Naive thymus-derived CD4-positive, alpha-beta T cell (primary cell): ENCODE measurements at regions of chr3 and their contacts with region 1.

Region 1: DNA sequence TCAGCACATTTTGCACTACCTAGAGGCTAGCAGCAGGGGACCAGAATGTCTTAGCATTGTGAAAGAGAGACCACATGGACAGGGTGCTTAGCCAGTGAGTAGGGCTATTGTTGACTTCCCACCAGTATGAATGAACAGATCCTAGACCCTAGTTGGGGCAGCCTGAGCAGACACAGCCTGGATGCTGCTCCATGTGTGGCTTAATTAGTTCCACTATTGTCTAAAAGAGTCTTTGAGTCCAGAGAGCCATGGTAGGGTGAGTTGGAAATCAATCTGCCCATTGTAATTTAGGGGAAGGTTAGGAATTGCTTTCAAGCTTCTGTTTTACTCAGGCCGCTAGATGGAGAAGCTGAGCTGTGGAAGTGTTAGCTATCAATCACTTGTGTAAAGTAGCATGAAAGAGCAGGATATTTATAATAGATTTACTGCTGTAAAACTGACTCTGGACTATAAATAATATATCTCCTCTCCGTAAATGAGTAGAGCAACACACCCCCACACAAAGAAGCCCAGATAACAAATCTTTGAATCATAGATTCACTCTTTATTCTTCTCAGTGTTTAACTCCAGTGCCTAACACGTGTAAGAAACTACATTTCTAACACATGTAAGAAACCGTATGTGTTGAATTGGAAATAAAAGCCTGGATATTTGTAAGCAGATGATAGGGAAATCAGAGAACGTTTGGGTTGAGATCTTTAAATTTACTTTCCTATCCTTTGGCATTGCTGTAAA is 4.1 kb upstream of the GCSAM start:
- DNase-seq: peak in 5 of 9 donors; percentile 42 to 55 (median 53)
- ATAC-seq: no peak
- H3K4me3 ChIP-seq: no peak overlapping the region
- H3K4me3 Mint-ChIP-seq: peak overlapping the region in 2 of 10 donors; percentile 3 to 21
- H3K27ac ChIP-seq: no peak overlapping the region
- H3K27ac Mint-ChIP-seq: peak overlapping the region in 8 of 9 donors; percentile 0 to 99 (median 96)
- H3K4me1 ChIP-seq: peaks cover 19 to 45% of the 10 kb centered on the region in 2 donors
- H3K4me1 Mint-ChIP-seq: peaks cover 31 to 76% (median 60%) of the 10 kb centered on the region in 7 donors
- H3K27me3 ChIP-seq: no peaks in the 10 kb centered on the region
- H3K27me3 Mint-ChIP-seq: no peaks in the 10 kb centered on the region

Region 2: GRCh38 chr3:111737706-111738086 is 399.4 kb before region 1 on chr3:
- CTCF ChIA-PET with region 1: no interaction called
- POLR2A ChIA-PET with region 1: no interaction called
- intact Hi-C with region 1: no loop called
- DNase-seq: no peak
- ATAC-seq: no peak
- H3K4me3 ChIP-seq: no peak overlapping the region
- H3K4me3 Mint-ChIP-seq: no peak overlapping the region
- H3K27ac ChIP-seq: no peak overlapping the region
- H3K27ac Mint-ChIP-seq: no peak overlapping the region
- H3K4me1 ChIP-seq: no peaks in the 10 kb centered on the region
- H3K4me1 Mint-ChIP-seq: peaks cover 0 to 23% (median 0%) of the 10 kb centered on the region in 7 donors
- H3K27me3 ChIP-seq: no peaks in the 10 kb centered on the region
- H3K27me3 Mint-ChIP-seq: no peaks in the 10 kb centered on the region

Region 3: GRCh38 chr3:112043603-112044201 is 93.4 kb before region 1 on chr3:
- CTCF ChIA-PET with region 1: no interaction called
- POLR2A ChIA-PET with region 1: no interaction called
- intact Hi-C with region 1: no loop called
- DNase-seq: peak in 8 of 9 donors; percentile 29 to 70 (median 58)
- ATAC-seq: peak; percentile 95
- H3K4me3 ChIP-seq: no peak overlapping the region
- H3K4me3 Mint-ChIP-seq: no peak overlapping the region
- H3K27ac ChIP-seq: no peak overlapping the region
- H3K27ac Mint-ChIP-seq: no peak overlapping the region
- H3K4me1 ChIP-seq: no peaks in the 10 kb centered on the region
- H3K4me1 Mint-ChIP-seq: no peaks in the 10 kb centered on the region
- H3K27me3 ChIP-seq: no peaks in the 10 kb centered on the region
- H3K27me3 Mint-ChIP-seq: peaks cover 0 to 3% (median 0%) of the 10 kb centered on the region in 5 donors

Region 4: DNA sequence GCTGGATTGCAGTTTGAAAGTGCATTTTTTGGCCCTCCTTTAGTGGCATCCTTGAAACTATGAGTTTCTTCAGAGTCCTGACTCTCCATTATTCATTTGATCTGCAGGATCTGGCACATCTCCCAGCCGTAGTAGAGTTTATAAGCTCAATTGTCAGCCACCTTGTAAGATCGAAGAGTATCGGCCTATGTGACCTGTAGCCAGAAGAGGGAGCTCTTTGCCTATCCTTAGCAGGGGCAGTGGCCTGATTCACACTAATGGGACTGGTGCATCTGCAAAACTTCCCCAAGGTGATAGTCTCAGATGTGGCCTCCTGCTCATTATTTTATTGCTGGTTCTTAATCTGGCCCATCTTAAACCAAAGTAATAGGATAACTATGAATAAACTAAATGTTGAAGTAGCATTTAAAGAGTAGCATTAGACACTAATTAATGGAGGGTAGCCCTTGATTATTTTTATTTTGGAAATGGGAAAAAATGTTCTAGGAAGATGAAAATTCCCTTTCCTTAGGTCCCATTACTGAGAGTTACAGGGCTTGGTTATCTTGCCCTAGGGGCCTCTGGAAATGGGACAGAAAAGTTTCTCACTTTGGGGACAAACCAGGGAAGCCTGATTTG is 25.2 kb before region 1 on chr3:
- CTCF ChIA-PET with region 1: interaction called, 21 read pairs
- POLR2A ChIA-PET with region 1: interaction called, 4 read pairs
- intact Hi-C with region 1: loop called (anchors 1 kb)
- DNase-seq: peak in 7 of 9 donors; percentile 52 to 75 (median 70)
- ATAC-seq: peak; percentile 96
- H3K4me3 ChIP-seq: no peak overlapping the region
- H3K4me3 Mint-ChIP-seq: peak overlapping the region in 1 of 10 donors; percentile 14
- H3K27ac ChIP-seq: no peak overlapping the region
- H3K27ac Mint-ChIP-seq: peak overlapping the region in 4 of 9 donors; percentile 28 to 48 (median 40)
- H3K4me1 ChIP-seq: no peaks in the 10 kb centered on the region
- H3K4me1 Mint-ChIP-seq: peaks cover 2 to 18% (median 9%) of the 10 kb centered on the region in 7 donors
- H3K27me3 ChIP-seq: no peaks in the 10 kb centered on the region
- H3K27me3 Mint-ChIP-seq: no peaks in the 10 kb centered on the region

Region 5: DNA sequence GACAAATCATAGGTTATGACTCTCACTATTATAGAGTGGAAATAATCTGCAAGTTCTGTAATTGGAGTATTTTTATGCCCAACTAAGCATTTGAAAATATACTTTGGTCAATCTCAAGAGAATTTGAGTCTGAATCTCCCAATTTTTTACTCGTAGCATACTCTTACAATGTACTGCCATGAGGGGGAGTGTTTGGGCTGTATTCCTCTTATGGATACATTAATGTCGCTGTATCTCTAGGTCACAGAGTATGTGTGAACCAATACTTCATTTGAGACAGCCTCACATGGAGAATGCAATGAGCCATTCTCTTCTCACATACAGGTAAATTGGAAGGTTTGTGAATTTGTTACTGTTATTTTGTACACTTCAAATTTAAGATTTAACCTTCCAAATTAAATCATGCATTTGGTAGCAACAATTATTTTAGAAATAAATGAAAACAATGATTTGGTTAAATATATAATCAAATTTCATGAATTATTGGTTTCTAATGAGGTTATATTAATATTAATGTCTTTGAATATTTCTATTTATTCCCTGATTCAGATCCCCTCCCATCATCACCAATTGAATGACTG is 190.3 kb after region 1 on chr3:
- CTCF ChIA-PET with region 1: interaction called, 3 read pairs
- POLR2A ChIA-PET with region 1: no interaction called
- intact Hi-C with region 1: loop called (anchors 1 kb)
- DNase-seq: peak in 7 of 9 donors; percentile 41 to 76 (median 66)
- ATAC-seq: peak; percentile 100
- H3K4me3 ChIP-seq: no peak overlapping the region
- H3K4me3 Mint-ChIP-seq: no peak overlapping the region
- H3K27ac ChIP-seq: no peak overlapping the region
- H3K27ac Mint-ChIP-seq: no peak overlapping the region
- H3K4me1 ChIP-seq: no peaks in the 10 kb centered on the region
- H3K4me1 Mint-ChIP-seq: peaks cover 0 to 8% (median 6%) of the 10 kb centered on the region in 7 donors
- H3K27me3 ChIP-seq: no peaks in the 10 kb centered on the region
- H3K27me3 Mint-ChIP-seq: peaks cover 0 to 20% (median 5%) of the 10 kb centered on the region in 5 donors

Region 6: DNA sequence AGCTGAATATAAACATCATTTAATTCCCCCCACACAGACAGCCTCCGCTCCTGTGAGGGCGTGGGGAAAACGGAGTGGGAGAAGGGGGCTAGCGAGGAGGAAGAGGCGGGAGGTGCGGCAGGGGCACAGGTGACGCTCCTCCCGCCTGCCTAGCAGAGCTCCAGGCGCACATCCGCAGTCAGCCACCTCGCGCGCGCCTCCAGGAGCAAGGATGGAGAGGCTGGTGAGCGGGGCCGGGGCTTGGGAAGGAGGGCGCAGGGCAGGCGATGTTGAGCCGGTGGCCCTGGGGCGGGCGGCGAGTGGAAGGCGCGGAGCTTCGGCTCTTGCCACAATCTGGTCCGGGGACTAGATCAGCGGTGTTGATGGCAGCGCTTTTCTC is 195.9 kb after region 1 on chr3 and contains the start of gene CD200:
- CTCF ChIA-PET with region 1: interaction called, 3 read pairs
- POLR2A ChIA-PET with region 1: interaction called, 3 read pairs
- intact Hi-C with region 1: loop called in 1 of 2 experiments (anchors 2 kb)
- DNase-seq: peak; percentile 25 to 69 (median 42)
- ATAC-seq: peak; percentile 79
- H3K4me3 ChIP-seq: peak within 1 kb of the TSS; percentile 78
- H3K4me3 Mint-ChIP-seq: peak within 1 kb of the TSS; percentile 82 to 95 (median 92)
- H3K27ac ChIP-seq: peak within 1 kb of the TSS; percentile 62
- H3K27ac Mint-ChIP-seq: peak within 1 kb of the TSS; percentile 71 to 90 (median 78)
- H3K4me1 ChIP-seq: peaks cover 0 to 6% of the 10 kb centered on the region in 2 donors
- H3K4me1 Mint-ChIP-seq: peaks cover 14 to 56% (median 47%) of the 10 kb centered on the region in 7 donors
- H3K27me3 ChIP-seq: no peaks in the 10 kb centered on the region
- H3K27me3 Mint-ChIP-seq: no peaks in the 10 kb centered on the region
- total RNA-seq, gene CD200: 2.5 to 9.1 (median 2.9) TPM

Region 7: DNA sequence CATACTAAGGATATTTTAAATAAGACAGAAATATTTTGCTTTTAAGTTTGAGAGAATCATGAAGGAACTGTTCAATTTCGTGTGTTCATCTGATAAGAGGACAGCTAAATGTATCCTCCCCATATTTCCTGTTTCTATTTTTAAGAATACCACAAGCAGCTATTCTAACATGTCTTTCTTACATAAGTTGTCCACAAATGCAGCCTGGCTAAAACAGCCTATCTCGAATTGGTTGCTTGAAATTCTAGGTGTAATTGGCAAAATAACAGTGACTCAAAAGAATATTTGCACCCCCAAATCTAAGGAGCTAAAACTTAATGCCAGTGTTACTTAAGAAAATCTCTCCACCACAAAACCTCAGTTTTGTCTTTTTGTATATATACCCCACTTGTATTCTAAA is 327.1 kb after region 1 on chr3:
- CTCF ChIA-PET with region 1: no interaction called
- POLR2A ChIA-PET with region 1: no interaction called
- intact Hi-C with region 1: loop called in 1 of 2 experiments (anchors 5 kb)
- DNase-seq: peak in 7 of 9 donors; percentile 28 to 56 (median 47)
- ATAC-seq: peak; percentile 83
- H3K4me3 ChIP-seq: peak overlapping the region; percentile 7
- H3K4me3 Mint-ChIP-seq: peak overlapping the region; percentile 39 to 84 (median 74)
- H3K27ac ChIP-seq: peak overlapping the region; percentile 43
- H3K27ac Mint-ChIP-seq: peak overlapping the region; percentile 55 to 96 (median 86)
- H3K4me1 ChIP-seq: peaks cover 54 to 63% of the 10 kb centered on the region in 2 donors
- H3K4me1 Mint-ChIP-seq: peaks cover 40 to 95% (median 88%) of the 10 kb centered on the region in 7 donors
- H3K27me3 ChIP-seq: no peaks in the 10 kb centered on the region
- H3K27me3 Mint-ChIP-seq: no peaks in the 10 kb centered on the region

Region 8: DNA sequence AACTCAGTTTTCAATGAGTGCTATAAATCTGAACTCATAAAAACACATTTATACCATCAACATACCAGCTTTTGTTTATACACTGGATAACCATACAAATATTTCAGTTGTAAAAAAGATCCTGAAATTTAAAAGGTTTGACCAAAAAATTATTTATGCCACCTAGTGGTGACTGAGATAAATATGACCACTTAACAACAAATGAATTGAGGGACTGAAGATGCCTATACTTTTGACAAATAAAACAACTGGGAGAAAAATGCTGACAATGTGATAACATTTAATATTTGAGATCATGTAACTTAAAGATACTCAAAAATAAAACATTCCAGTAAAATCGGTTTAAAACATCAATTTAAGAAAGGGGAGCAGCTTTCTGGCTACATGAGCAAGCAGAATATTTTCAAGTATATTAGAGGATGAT is 394.2 kb after region 1 on chr3:
- CTCF ChIA-PET with region 1: interaction called, 8 read pairs
- POLR2A ChIA-PET with region 1: no interaction called
- intact Hi-C with region 1: loop called (anchors 1 to 5 kb)
- DNase-seq: peak in 5 of 9 donors; percentile 25 to 40 (median 25)
- ATAC-seq: peak; percentile 45
- H3K4me3 ChIP-seq: no peak overlapping the region
- H3K4me3 Mint-ChIP-seq: no peak overlapping the region
- H3K27ac ChIP-seq: no peak overlapping the region
- H3K27ac Mint-ChIP-seq: peak overlapping the region in 6 of 9 donors; percentile 7 to 72 (median 14)
- H3K4me1 ChIP-seq: no peaks in the 10 kb centered on the region
- H3K4me1 Mint-ChIP-seq: peaks cover 0 to 5% (median 3%) of the 10 kb centered on the region in 7 donors
- H3K27me3 ChIP-seq: no peaks in the 10 kb centered on the region
- H3K27me3 Mint-ChIP-seq: no peaks in the 10 kb centered on the region

Region 9: GRCh38 chr3:113002679-113003078 is 865.6 kb after region 1 on chr3:
- CTCF ChIA-PET with region 1: no interaction called
- POLR2A ChIA-PET with region 1: no interaction called
- intact Hi-C with region 1: loop called in 1 of 2 experiments (anchors 5 kb)
- DNase-seq: peak in 7 of 9 donors; percentile 27 to 53 (median 41)
- ATAC-seq: peak; percentile 50
- H3K4me3 ChIP-seq: no peak overlapping the region
- H3K4me3 Mint-ChIP-seq: peak overlapping the region in 8 of 10 donors; percentile 19 to 70 (median 48)
- H3K27ac ChIP-seq: peak overlapping the region; percentile 78
- H3K27ac Mint-ChIP-seq: peak overlapping the region; percentile 74 to 98 (median 89)
- H3K4me1 ChIP-seq: peaks cover 22 to 61% of the 10 kb centered on the region in 2 donors
- H3K4me1 Mint-ChIP-seq: peaks cover 33 to 99% (median 91%) of the 10 kb centered on the region in 7 donors
- H3K27me3 ChIP-seq: no peaks in the 10 kb centered on the region
- H3K27me3 Mint-ChIP-seq: no peaks in the 10 kb centered on the region